Pancreas (tissue), 10 donors: ENCODE measurements at regions of chr4 and their contacts with region 1.

Region 1: DNA sequence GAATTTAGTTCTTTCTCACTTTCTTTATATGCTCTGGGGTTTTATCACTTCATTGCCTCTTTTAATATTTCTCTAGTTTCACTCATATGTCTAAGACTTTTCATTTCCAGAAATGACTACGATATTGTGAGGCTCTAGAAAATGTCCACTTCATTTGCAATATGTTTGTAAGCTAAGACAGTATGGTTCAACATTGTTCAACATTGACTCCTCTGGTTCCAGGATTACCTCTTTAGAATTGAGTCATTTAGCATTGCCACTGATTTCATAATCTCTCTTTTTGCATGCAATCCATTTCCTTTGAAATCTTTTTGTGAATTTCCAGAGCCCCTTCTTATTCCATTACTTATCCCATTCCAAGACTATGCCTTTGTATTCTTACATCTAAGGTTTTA is 32.3 kb downstream of the BBS12 start:
- DNase-seq: no peak
- ATAC-seq: peak in 1 of 4 donors; percentile 44
- H3K4me3 ChIP-seq: no peak overlapping the region
- H3K27ac ChIP-seq: no peak overlapping the region
- H3K4me1 ChIP-seq: no peaks in the 10 kb centered on the region
- H3K27me3 ChIP-seq: no peaks in the 10 kb centered on the region
- CTCF ChIP-seq: no peak

Region 2: GRCh38 chr4:122900314-122900713 is 135.5 kb after region 1 on chr4:
- intact Hi-C with region 1: loop called in 1 of 3 experiments (anchors 10 kb)
- DNase-seq: no peak
- ATAC-seq: no peak
- H3K4me3 ChIP-seq: no peak overlapping the region
- H3K27ac ChIP-seq: no peak overlapping the region
- H3K4me1 ChIP-seq: no peaks in the 10 kb centered on the region
- H3K27me3 ChIP-seq: no peaks in the 10 kb centered on the region
- CTCF ChIP-seq: no peak

Region 3: DNA sequence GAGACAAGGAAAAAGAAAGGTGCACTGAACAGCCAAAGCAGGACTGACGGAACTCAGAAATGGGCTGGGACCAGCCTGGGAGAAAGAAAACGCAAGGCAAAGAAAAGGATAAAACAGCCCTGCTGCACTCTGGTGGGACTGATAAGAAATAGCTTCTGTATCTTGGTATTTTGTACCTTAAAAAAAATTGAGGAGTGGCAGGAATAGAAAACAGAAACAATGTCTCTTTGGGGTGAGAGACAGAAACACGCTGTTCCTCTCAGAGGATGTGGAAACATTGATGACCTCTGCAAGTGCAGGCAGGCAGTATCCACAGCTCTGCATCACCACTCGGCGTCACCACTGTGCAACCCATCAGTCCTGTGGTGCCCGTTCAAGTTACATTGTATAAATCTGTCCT is 479.3 kb after region 1 on chr4:
- intact Hi-C with region 1: no loop called
- DNase-seq: no peak
- ATAC-seq: peak in 1 of 4 donors; percentile 50
- H3K4me3 ChIP-seq: no peak overlapping the region
- H3K27ac ChIP-seq: no peak overlapping the region
- H3K4me1 ChIP-seq: peaks cover 0 to 8% (median 4%) of the 10 kb centered on the region in 3 donors
- H3K27me3 ChIP-seq: no peaks in the 10 kb centered on the region
- CTCF ChIP-seq: no peak